ENCODE measurements at regions of chr14 and their contacts with region 1.

Region 1: GRCh38 chr14:38867561-38868150 is 235.4 kb downstream of the SEC23A start:
- DNase-seq: peak; percentile 78
- ATAC-seq: peak; percentile 78
- H3K4me3 Mint-ChIP-seq: no peak overlapping the region
- H3K27ac Mint-ChIP-seq: no peak overlapping the region
- H3K4me1 Mint-ChIP-seq: no peaks in the 10 kb centered on the region
- H3K27me3 Mint-ChIP-seq: peaks cover 6% of the 10 kb centered on the region

Region 2: DNA sequence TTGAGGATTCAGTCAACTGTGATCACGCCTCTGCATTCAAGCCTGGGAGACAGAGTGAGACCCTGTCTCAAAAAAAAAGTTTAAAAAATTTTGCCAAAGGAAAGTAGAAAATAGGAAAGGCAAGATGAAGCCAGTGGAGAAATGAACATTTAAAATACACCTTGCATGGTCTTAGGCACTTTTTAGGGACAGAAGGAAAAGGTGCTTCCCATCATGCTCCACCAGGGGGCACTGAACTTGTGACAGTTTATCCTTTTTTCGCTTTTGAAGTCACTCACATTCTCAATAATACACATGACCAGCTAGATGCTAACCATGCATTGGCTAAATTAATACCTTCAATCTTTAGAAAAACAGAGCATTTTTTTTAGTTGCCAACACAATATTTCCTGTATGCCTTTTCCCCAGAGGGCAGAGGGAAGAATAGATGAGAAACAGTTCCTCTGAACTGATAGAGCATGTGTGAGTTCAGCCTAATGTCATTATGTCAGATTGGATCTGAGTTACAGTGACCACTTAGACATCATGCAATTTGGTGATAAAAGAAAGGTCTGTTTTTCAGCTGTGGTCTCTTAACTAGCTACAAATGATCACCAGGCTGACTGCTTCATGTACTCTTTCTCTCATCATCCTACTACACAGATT is 881.7 kb before region 1 on chr14:
- CTCF ChIA-PET with region 1: no interaction called
- POLR2A ChIA-PET with region 1: no interaction called
- intact Hi-C with region 1: loop called in 1 of 2 experiments (anchors 10 kb)
- DNase-seq: peak; percentile 63
- ATAC-seq: peak; percentile 36
- H3K4me3 Mint-ChIP-seq: no peak overlapping the region
- H3K27ac Mint-ChIP-seq: no peak overlapping the region
- H3K4me1 Mint-ChIP-seq: no peaks in the 10 kb centered on the region
- H3K27me3 Mint-ChIP-seq: no peaks in the 10 kb centered on the region

Region 3: GRCh38 chr14:38721822-38722431 is 145.7 kb before region 1 on chr14:
- CTCF ChIA-PET with region 1: interaction called, 10 read pairs
- POLR2A ChIA-PET with region 1: no interaction called
- intact Hi-C with region 1: loop called (anchors 1 kb)
- DNase-seq: peak; percentile 61
- ATAC-seq: peak; percentile 51
- H3K4me3 Mint-ChIP-seq: no peak overlapping the region
- H3K27ac Mint-ChIP-seq: no peak overlapping the region
- H3K4me1 Mint-ChIP-seq: no peaks in the 10 kb centered on the region
- H3K27me3 Mint-ChIP-seq: no peaks in the 10 kb centered on the region

Region 4: DNA sequence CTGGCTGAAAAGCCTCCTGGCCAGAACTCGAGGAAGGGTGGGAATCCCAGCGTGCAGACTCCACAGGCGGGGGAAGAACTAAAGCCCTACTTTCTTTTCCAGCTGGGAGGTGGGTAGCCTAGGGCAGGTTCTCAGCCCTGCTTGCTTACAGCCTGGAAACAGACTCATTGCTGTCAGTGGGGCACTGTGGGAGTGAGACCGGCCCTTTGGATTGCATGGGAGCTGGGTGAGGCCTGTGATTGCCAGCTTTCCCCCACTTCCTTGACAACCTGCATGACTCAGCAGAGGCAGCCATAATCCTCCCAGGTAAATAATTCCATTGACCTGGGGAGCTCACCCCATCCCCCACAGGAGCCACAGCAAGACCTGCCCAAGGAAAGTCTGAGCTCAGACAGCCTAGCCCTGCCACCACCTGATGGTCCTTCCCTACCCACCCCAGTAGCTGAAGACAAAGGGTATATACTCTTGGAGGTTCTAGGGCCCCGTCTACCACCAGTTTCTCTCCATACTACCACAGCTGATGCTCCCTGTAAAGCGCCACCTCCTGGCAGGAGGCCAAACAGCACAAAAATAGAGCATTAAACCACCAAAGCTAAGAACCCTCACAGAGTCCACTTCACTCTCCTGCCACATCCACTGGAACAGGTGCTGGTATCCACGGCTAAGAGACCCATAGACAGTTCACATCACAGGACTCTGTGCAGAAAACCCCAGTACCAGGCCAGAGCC is 58.8 kb before region 1 on chr14:
- CTCF ChIA-PET with region 1: no interaction called
- POLR2A ChIA-PET with region 1: no interaction called
- intact Hi-C with region 1: no loop called
- DNase-seq: peak; percentile 28
- ATAC-seq: no peak
- H3K4me3 Mint-ChIP-seq: no peak overlapping the region
- H3K27ac Mint-ChIP-seq: no peak overlapping the region
- H3K4me1 Mint-ChIP-seq: no peaks in the 10 kb centered on the region
- H3K27me3 Mint-ChIP-seq: peaks cover 1% of the 10 kb centered on the region

Region 5: GRCh38 chr14:38848243-38848935 is 19.3 kb before region 1 on chr14:
- CTCF ChIA-PET with region 1: no interaction called
- POLR2A ChIA-PET with region 1: no interaction called
- intact Hi-C with region 1: no loop called
- DNase-seq: no peak
- ATAC-seq: no peak
- H3K4me3 Mint-ChIP-seq: no peak overlapping the region
- H3K27ac Mint-ChIP-seq: no peak overlapping the region
- H3K4me1 Mint-ChIP-seq: no peaks in the 10 kb centered on the region
- H3K27me3 Mint-ChIP-seq: no peaks in the 10 kb centered on the region

Region 6: DNA sequence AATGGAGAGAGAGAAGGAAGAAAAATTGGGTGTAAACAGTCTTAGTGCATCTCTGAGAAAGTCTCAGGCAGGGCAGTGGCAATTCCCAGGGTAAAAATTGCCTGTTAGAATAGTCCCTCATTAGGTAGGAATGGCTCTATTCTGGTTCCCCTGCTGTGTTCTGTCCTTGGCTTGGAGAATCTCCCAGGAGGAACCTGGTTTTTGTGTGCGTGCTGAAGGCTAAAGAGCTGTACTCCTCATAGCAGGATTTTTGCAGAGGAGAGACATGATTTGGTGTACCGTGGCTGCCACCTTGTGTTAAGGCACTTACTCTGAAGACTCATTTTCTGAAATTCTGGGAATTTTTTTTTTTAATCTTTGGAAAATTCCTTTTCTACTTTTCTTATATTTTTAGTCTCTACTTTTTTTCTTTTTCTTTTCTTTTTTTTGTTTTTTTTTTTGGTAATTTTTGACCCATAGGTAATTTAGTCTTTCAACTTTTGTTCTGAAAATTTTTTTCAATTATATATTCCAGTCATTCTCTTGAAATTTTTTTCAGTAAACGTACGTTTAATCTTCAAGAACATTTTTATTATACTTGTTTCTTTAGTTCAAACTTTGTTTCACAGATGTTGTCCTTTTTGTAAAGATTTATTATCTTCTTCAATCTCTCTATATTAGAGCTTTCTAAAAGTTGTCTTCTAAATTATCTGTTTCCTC is 500.8 kb after region 1 on chr14:
- CTCF ChIA-PET with region 1: no interaction called
- POLR2A ChIA-PET with region 1: no interaction called
- intact Hi-C with region 1: no loop called
- DNase-seq: peak; percentile 64
- ATAC-seq: no peak
- H3K4me3 Mint-ChIP-seq: no peak overlapping the region
- H3K27ac Mint-ChIP-seq: no peak overlapping the region
- H3K4me1 Mint-ChIP-seq: no peaks in the 10 kb centered on the region
- H3K27me3 Mint-ChIP-seq: no peaks in the 10 kb centered on the region

Region 7: DNA sequence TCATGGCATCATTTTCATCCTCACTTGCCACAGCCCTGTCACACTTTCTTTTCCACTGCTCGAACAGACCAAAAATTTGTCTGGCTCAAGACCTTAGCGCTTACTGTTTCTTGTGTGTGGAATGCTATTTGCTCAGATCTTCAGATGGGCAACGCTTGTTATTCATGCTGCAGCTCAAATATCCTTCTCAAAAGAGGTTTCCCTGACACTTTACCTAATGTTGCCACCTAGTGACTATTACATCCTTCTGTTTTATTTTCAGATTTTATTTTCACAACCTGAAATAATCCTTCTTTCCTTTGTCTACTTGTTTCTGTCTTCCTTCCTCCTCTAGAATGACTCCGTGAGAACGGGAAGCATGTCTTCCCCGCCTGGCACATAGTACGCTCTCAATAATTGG is 558.9 kb after region 1 on chr14:
- CTCF ChIA-PET with region 1: no interaction called
- POLR2A ChIA-PET with region 1: no interaction called
- intact Hi-C with region 1: no loop called
- DNase-seq: no peak
- ATAC-seq: peak; percentile 24
- H3K4me3 Mint-ChIP-seq: peak overlapping the region; percentile 1
- H3K27ac Mint-ChIP-seq: peak overlapping the region; percentile 59
- H3K4me1 Mint-ChIP-seq: peaks cover 65% of the 10 kb centered on the region
- H3K27me3 Mint-ChIP-seq: no peaks in the 10 kb centered on the region